HepG2 (cell line): ENCODE measurements at regions of chr6 and their contacts with region 1.

Region 1: DNA sequence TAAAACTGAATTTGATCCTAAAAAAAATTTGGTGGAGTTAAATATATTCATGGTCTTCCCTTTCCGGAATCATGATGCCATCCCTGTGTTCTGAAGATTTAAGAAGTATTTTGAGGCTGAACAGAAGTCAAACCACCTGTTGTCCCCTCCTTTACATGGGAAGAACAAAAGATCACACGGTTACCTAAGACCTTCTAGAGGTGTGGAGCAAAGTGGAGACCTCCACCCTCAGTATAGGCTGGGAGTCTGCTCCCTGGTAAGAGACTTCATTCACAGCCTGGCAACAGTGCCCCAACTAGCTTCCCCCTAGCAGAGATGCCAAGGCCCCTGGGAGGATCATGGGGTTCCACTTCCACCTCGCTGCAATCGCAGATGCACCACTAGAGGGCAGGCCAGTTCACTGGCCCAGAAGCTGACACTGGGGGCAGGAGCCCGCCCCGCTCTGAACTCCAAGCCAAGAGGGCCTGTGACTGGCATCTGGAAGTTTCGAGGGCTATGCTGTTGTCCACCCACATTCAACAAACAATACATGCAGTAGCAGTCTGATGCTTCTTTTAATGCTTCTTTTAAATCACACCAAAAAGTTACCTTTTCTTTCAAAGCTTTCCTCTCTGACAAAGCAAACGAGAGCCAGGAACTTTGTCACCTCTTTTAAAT is 19.5 kb upstream of the UBE2J1 start:
- DNase-seq: peak; percentile 47
- ATAC-seq: peak; percentile 94
- H3K4me3 ChIP-seq: no peak overlapping the region
- H3K27ac ChIP-seq: no peak overlapping the region
- H3K4me1 ChIP-seq: 0 out of 2 replicates have a peak, but pooled peaks cover 7% of the 10 kb centered on the region
- H3K27me3 ChIP-seq: no peaks in the 10 kb centered on the region
- CTCF ChIP-seq: peak; percentile 92
- EP300 ChIP-seq: no peak
- POLR2A ChIP-seq: no peak
- RAD21 ChIP-seq: 0 out of 2 replicates have a peak, but pooled peaks have one; percentile 27

Region 2: DNA sequence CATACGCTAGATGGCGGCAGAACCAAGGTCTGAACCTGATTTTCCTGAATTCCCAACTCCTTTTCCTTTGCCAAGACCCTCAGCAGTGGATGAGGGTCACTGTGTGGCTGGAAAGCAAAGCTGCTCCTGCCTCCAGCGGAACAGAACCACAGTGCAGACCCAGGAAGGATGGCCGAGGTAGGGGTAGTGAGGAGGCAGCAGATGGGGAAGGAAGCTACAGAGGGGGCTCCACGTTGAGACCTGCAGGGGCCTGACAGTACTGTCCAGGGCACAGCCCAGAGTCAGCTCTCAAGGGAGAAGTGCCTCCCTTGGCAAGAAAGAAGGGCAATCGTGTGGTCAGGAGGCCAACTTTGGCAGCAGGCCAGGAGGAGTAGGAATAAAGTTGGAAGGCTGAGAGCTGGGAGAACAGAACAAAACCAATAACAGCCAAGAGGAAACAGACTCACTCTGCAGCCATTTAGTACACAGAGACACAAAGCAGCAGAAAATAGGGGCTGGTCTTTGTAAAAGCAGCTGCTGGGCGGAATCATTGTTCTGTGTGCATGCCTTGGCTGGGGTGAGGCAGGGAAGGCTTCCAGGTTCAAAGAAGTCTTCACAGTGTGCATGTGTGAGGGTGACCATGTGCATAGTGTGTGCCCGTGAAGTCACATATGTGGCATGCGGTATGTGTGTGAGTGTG is 60.0 kb before region 1 on chr6:
- CTCF ChIA-PET with region 1: interaction called, 10 read pairs
- POLR2A ChIA-PET with region 1: no interaction called
- in situ Hi-C with region 1: loop called (anchors 5 kb)
- intact Hi-C with region 1: loop called (anchors 1 kb)
- DNase-seq: peak; percentile 40
- ATAC-seq: peak; percentile 83
- H3K4me3 ChIP-seq: peak overlapping the region in 1 of 3 experiments; percentile 52; a peak in 1 of 6 replicates
- H3K27ac ChIP-seq: no peak overlapping the region
- H3K4me1 ChIP-seq: peaks cover 18% of the 10 kb centered on the region
- H3K27me3 ChIP-seq: 0 out of 5 replicates have a peak, but pooled peaks cover 0 to 4% of the 10 kb centered on the region in 2 experiments
- CTCF ChIP-seq: peak; percentile 95
- EP300 ChIP-seq: no peak
- POLR2A ChIP-seq: no peak
- RAD21 ChIP-seq: no peak; the same call in 1 of the 2 replicates

Region 3: GRCh38 chr6:89597988-89598692 is 226.2 kb after region 1 on chr6:
- CTCF ChIA-PET with region 1: no interaction called
- POLR2A ChIA-PET with region 1: no interaction called
- in situ Hi-C with region 1: no loop called
- intact Hi-C with region 1: loop called (anchors 5 kb)
- DNase-seq: peak; percentile 64
- ATAC-seq: peak; percentile 80
- H3K4me3 ChIP-seq: no peak overlapping the region
- H3K27ac ChIP-seq: no peak overlapping the region
- H3K4me1 ChIP-seq: no peaks in the 10 kb centered on the region
- H3K27me3 ChIP-seq: no peaks in the 10 kb centered on the region
- CTCF ChIP-seq: peak; percentile 53
- EP300 ChIP-seq: no peak
- POLR2A ChIP-seq: no peak
- RAD21 ChIP-seq: no peak

Region 4: GRCh38 chr6:89610149-89610642 is 238.2 kb after region 1 on chr6:
- CTCF ChIA-PET with region 1: interaction called, 4 read pairs
- POLR2A ChIA-PET with region 1: interaction called, 3 read pairs
- in situ Hi-C with region 1: no loop called
- intact Hi-C with region 1: loop called (anchors 5 kb)
- DNase-seq: peak; percentile 40
- ATAC-seq: peak; percentile 93
- H3K4me3 ChIP-seq: no peak overlapping the region
- H3K27ac ChIP-seq: no peak overlapping the region
- H3K4me1 ChIP-seq: no peaks in the 10 kb centered on the region
- H3K27me3 ChIP-seq: no peaks in the 10 kb centered on the region
- CTCF ChIP-seq: peak; percentile 82
- EP300 ChIP-seq: no peak
- POLR2A ChIP-seq: no peak
- RAD21 ChIP-seq: peak; percentile 54; the same call in 1 of the 2 replicates